PC-3 (cell line): ENCODE measurements at regions of chr18 and their contacts with region 1.

Region 1: DNA sequence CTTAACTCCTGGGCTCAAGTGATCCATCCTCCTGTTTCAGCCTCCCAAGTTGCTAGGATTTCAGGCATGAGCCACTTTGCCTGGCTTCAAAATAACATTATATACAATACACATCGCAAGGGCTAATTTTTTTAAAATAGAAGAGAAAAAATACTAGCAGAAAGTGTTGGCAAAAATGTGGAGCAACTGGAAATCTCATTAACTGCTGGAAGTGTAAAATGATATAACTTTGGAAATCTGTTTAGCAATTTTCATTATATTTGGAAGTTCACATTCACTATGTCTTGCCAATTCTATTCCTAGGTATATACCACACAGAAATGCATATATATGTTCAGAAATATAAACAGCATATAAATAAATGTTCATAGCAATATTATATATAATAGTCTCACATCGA is 55.1 kb upstream of the ZBTB14 start:
- DNase-seq: no peak
- ATAC-seq: no peak
- H3K4me3 ChIP-seq: no peak overlapping the region
- H3K27ac ChIP-seq: no peak overlapping the region
- H3K4me1 ChIP-seq: no peaks in the 10 kb centered on the region
- H3K27me3 ChIP-seq: no peaks in the 10 kb centered on the region
- CTCF ChIP-seq: no peak

Region 2: GRCh38 chr18:5398269-5398668 is 47.6 kb after region 1 on chr18:
- CTCF ChIA-PET with region 1: no interaction called
- POLR2A ChIA-PET with region 1: no interaction called
- intact Hi-C with region 1: no loop called
- DNase-seq: no peak
- ATAC-seq: no peak
- H3K4me3 ChIP-seq: no peak overlapping the region
- H3K27ac ChIP-seq: no peak overlapping the region
- H3K4me1 ChIP-seq: no peaks in the 10 kb centered on the region
- H3K27me3 ChIP-seq: no peaks in the 10 kb centered on the region
- CTCF ChIP-seq: no peak

Region 3: DNA sequence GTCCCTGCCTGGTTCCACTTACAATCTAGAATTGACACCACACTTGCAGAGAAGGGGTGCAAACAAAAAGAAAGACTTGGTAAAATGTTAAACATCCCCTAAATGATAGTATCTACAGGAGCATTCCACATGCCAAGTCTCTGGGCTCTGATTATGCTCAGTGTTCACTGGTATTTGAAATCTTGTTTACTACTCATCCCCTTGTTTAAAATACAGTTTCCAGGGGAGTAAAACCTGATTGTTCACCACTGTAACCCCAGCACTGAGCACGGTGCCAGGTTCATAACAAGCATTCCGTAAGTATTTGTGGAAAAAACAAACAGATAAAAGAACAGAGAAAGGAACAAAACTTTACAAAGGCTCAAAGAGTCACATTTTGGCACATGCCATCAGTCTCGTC is 181.4 kb after region 1 on chr18:
- CTCF ChIA-PET with region 1: no interaction called
- POLR2A ChIA-PET with region 1: interaction called, 13 read pairs
- intact Hi-C with region 1: no loop called
- DNase-seq: no peak
- ATAC-seq: no peak
- H3K4me3 ChIP-seq: no peak overlapping the region
- H3K27ac ChIP-seq: no peak overlapping the region
- H3K4me1 ChIP-seq: no peaks in the 10 kb centered on the region
- H3K27me3 ChIP-seq: no peaks in the 10 kb centered on the region
- CTCF ChIP-seq: no peak